Activated CD4-positive, alpha-beta memory T cell treated with anti-CD3 and anti-CD28 coated beads for 36 hours (primary cell): ENCODE measurements at regions of chr5 and their contacts with region 1.

Region 1: DNA sequence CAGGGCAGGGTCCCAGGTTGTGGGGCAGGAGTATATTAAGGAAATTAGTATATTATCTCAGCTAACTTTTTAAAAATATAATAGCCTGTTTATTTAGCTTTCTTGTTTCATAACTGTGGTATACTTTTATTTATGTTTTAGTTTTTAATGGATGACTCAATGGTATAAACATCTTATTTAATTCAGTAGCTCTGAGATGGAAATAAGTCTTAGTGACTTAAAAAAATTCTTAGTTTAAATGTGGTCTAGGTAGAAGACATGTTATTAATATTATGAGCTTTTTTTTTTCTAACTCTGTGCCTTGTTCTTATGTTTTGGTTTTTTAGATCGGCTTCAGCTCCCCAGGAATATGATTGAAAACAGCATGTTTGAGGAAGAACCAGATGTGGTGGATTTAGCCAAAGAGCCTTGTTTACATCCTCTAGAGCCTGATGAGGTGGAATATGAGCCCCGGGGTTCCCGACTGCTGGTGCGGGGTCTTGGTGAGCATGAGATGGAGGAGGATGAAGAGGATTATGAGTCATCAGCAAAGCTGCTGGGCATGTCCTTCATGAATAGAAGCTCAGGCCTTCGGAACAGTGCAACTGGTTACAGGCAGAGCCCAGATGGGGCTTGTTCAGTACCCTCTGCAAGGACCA is 43.1 kb downstream of the LNPEP start:
- DNase-seq: no peak
- H3K4me3 Mint-ChIP-seq: no peak overlapping the region
- H3K27ac Mint-ChIP-seq: no peak overlapping the region
- H3K4me1 Mint-ChIP-seq: peaks cover 33% of the 10 kb centered on the region
- H3K27me3 Mint-ChIP-seq: no peaks in the 10 kb centered on the region

Region 2: GRCh38 chr5:96816411-96816939 is 162.5 kb before region 1 on chr5:
- CTCF ChIA-PET with region 1: no interaction called
- POLR2A ChIA-PET with region 1: no interaction called
- intact Hi-C with region 1: no loop called
- DNase-seq: peak; percentile 70
- H3K4me3 Mint-ChIP-seq: peak overlapping the region; percentile 78
- H3K27ac Mint-ChIP-seq: peak overlapping the region; percentile 93
- H3K4me1 Mint-ChIP-seq: peaks cover 64% of the 10 kb centered on the region
- H3K27me3 Mint-ChIP-seq: no peaks in the 10 kb centered on the region

Region 3: DNA sequence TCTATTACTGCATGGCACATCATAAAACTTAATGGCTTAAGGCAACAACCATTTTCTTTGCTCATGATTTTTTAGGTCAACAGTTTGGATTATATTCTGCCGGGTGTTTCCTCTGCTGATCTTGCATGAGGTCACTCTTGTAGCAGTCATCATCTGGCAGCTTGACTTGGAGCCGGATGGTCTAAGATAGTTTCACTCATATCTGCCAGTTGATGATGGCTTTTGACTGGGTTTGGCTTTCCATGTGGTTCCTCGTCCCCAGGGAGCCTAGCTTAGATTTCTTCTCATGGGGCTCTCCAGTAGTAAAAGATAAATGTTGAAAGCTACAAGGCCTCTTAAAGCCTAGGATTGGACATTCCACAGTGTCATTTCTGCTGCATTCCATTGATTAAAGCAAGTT is 15.7 kb before region 1 on chr5:
- CTCF ChIA-PET with region 1: no interaction called
- POLR2A ChIA-PET with region 1: interaction called, 3 read pairs
- intact Hi-C with region 1: loop called (anchors 2 kb)
- DNase-seq: peak; percentile 41
- H3K4me3 Mint-ChIP-seq: peak overlapping the region; percentile 59
- H3K27ac Mint-ChIP-seq: peak overlapping the region; percentile 86
- H3K4me1 Mint-ChIP-seq: peaks cover 77% of the 10 kb centered on the region
- H3K27me3 Mint-ChIP-seq: no peaks in the 10 kb centered on the region

Region 4: DNA sequence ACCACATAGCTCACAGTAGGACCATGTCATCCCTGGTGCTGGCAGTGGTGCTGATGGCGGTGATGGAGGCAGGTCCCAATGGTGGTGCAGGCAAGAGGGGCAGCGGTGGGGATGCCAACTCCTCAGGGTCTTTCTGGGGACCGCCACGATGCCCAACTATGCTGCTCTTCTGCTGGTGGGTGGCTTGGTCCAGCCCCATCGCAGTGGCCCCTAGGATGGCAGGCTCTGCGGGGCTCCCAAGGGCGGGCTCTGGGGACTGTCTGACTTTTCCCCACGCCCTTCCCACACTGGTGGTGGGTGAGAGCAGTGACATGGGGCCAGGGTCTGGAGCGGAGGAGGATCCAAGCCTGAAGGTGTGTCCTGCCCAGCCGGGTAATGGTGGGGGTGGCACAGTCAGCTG is 493.0 kb after region 1 on chr5:
- CTCF ChIA-PET with region 1: no interaction called
- POLR2A ChIA-PET with region 1: no interaction called
- intact Hi-C with region 1: no loop called
- DNase-seq: no peak
- H3K4me3 Mint-ChIP-seq: no peak overlapping the region
- H3K27ac Mint-ChIP-seq: no peak overlapping the region
- H3K4me1 Mint-ChIP-seq: no peaks in the 10 kb centered on the region
- H3K27me3 Mint-ChIP-seq: no peaks in the 10 kb centered on the region